WTC11 (cell line): ENCODE measurements at regions of chr14 and their contacts with region 1.

Region 1: GRCh38 chr14:103346286-103346685 is 12.2 kb downstream of the EIF5 start:
- DNase-seq: no peak
- ATAC-seq: no peak
- H3K4me3 Mint-ChIP-seq: no peak overlapping the region
- H3K27ac Mint-ChIP-seq: no peak overlapping the region
- H3K4me1 Mint-ChIP-seq: peaks cover 19% of the 10 kb centered on the region
- H3K27me3 Mint-ChIP-seq: no peaks in the 10 kb centered on the region
- CTCF ChIP-seq: no peak

Region 2: DNA sequence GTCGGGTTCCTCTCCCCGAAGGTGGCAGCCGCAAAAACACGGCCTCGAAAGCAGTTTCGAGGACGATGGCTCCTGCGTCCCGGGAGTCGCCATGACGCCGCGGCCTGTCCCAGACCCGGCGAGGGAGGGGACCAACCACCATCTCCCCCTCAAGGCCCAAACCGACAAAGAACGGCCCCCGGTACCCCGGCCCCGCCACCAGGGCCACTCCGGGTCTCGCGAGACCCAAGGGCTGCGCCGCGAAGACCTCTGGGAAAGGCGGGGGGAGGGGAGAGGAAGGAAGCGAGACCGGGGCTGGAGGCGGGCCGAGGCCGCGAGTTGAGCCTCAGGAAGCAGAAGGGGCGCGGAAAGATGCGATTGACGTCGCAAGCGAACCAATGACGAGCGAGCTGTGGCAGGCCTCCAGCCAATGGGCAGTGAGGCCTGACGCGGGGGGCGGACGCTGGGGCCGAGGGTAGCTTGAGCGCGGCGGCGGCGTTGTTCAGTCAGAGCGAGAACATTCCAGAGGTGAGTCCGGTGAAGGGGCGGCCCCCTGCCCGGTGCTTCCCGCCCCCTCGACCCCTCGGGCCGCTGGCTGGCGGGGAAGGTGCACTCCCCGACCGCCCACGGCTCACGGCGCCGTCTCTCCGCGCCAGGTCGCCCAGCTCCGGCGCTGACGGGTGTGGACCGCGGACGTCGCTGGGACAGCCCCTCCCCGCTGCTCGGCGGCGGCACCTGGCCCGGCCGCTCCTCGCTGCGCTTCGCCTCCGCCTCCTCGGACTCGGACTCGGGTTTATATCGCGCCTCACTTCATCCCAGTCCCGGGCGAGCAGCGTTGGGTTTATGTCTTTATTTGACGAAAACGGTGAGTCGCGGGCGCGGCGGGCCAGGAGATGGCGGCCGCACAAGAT is 12.3 kb before region 1 on chr14 and contains the start of gene EIF5:
- CTCF ChIA-PET with region 1: interaction called, 4 read pairs
- POLR2A ChIA-PET with region 1: interaction called, 39 read pairs
- DNase-seq: peak; percentile 98
- ATAC-seq: peak; percentile 95
- H3K4me3 Mint-ChIP-seq: peak within 1 kb of the TSS; percentile 80
- H3K27ac Mint-ChIP-seq: peak within 1 kb of the TSS; percentile 94
- H3K4me1 Mint-ChIP-seq: peaks cover 46% of the 10 kb centered on the region
- H3K27me3 Mint-ChIP-seq: no peaks in the 10 kb centered on the region
- CTCF ChIP-seq: no peak
- total RNA-seq, gene EIF5: 224 to 282 TPM (median 236 TPM) in 3 replicates

Region 3: DNA sequence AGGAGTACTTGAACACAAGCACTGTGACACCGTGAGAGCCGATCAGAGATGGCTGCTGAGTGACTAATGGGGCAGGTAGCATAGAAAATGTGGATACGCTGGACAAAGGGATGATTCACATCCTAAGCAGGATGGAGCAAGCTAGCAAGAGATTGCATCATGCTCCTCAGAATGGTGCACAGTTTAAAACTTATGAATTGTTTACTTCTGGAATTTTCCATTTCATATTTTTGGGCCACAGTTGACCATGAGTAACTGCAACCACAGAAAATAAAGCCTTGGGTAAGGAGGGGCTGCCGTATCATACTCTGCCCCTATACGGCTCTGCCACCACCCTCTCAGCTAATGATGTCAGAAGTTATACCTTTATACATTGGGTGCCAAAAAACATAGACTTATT is 15.6 kb after region 1 on chr14:
- CTCF ChIA-PET with region 1: no interaction called
- POLR2A ChIA-PET with region 1: no interaction called
- DNase-seq: no peak
- ATAC-seq: no peak
- H3K4me3 Mint-ChIP-seq: no peak overlapping the region
- H3K27ac Mint-ChIP-seq: no peak overlapping the region
- H3K4me1 Mint-ChIP-seq: peaks cover 4% of the 10 kb centered on the region
- H3K27me3 Mint-ChIP-seq: peaks cover 5% of the 10 kb centered on the region
- CTCF ChIP-seq: no peak